Endothelial cell of umbilical vein (primary cell): ENCODE measurements at regions of chr10 and their contacts with region 1.

Region 1: GRCh38 chr10:79374312-79375191 is 27.3 kb downstream of the PPIF start:
- DNase-seq: peak; percentile 58
- H3K4me3 ChIP-seq: no peak overlapping the region
- H3K27ac ChIP-seq: no peak overlapping the region
- H3K4me1 ChIP-seq: no peaks in the 10 kb centered on the region
- H3K27me3 ChIP-seq: peaks cover 2 to 5% of the 10 kb centered on the region in 2 experiments
- CTCF ChIP-seq: peak; percentile 90
- POLR2A ChIP-seq: no peak

Region 2: DNA sequence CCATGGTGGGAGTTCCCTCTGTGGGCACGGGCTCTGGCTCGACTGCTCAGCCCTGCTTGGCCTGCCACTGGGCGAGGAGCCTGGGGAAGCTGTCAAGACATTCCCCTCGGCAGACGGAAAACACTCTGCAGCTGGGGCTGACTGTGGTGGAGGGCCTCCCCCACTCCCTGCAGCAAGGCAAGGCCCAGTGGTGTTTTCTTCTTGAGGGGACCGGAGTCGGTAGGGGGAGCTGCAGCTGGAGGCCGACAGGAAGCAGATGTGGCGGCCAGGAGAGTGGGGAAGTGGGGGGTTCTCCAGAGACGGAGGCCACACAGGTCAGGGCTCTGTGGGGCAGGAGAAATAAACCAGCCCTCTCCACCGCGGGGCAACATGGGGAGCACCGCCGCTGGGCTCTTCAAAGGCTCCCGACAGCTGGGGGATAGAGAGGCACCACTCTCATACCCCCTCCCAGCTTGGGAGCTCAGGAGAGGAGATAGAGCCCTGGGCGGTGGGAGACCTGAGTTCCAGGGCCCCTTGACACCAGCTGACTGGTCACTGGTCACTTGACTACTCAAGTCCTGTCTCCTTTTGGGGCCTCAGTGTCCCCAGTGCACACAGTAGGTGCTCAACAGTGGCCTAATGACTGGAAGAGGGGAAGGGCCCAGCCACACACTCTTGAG is 16.1 kb after region 1 on chr10:
- CTCF ChIA-PET with region 1: interaction called, 16 read pairs
- POLR2A ChIA-PET with region 1: no interaction called
- dilution Hi-C with region 1: no loop called
- intact Hi-C with region 1: no loop called
- DNase-seq: no peak
- H3K4me3 ChIP-seq: no peak overlapping the region
- H3K27ac ChIP-seq: no peak overlapping the region
- H3K4me1 ChIP-seq: no peaks in the 10 kb centered on the region
- H3K27me3 ChIP-seq: no peaks in the 10 kb centered on the region
- CTCF ChIP-seq: no peak
- POLR2A ChIP-seq: no peak

Region 3: DNA sequence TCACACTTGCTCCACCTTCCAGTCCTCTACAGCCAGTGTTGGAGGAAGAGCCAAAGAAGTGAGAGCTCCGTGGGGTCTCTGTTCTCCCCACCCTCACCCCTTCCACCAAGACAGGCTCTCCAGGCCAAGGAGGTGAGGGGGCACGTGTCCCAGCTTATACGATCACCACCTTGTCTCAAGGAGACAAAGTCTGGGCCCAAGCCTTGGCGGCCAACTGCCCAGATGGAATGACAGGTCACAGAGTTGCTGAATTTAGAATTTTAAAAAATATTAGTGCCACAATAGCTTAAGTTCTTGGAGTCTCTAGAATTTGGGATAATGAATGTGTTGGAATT is 39.4 kb after region 1 on chr10:
- CTCF ChIA-PET with region 1: interaction called, 10 read pairs
- POLR2A ChIA-PET with region 1: no interaction called
- dilution Hi-C with region 1: no loop called
- intact Hi-C with region 1: no loop called
- DNase-seq: no peak
- H3K4me3 ChIP-seq: no peak overlapping the region
- H3K27ac ChIP-seq: no peak overlapping the region
- H3K4me1 ChIP-seq: peaks cover 11% of the 10 kb centered on the region
- H3K27me3 ChIP-seq: no peaks in the 10 kb centered on the region
- CTCF ChIP-seq: no peak
- POLR2A ChIP-seq: no peak

Region 4: GRCh38 chr10:79445141-79445976 is 70.8 kb after region 1 on chr10 and contains the start of gene ZCCHC24:
- CTCF ChIA-PET with region 1: interaction called, 20 read pairs
- POLR2A ChIA-PET with region 1: no interaction called
- dilution Hi-C with region 1: no loop called
- intact Hi-C with region 1: no loop called
- DNase-seq: peak; percentile 98
- H3K4me3 ChIP-seq: peak within 1 kb of the TSS; percentile 45 to 65 (median 64)
- H3K27ac ChIP-seq: no peak within 1 kb of the TSS
- H3K4me1 ChIP-seq: peaks cover 19% of the 10 kb centered on the region
- H3K27me3 ChIP-seq: no peaks in the 10 kb centered on the region
- CTCF ChIP-seq: no peak
- POLR2A ChIP-seq: peak; percentile 62
- total RNA-seq, gene ZCCHC24: 5.7 and 8.4 TPM in 2 replicates

Region 5: GRCh38 chr10:79463578-79464496 is 89.3 kb after region 1 on chr10:
- CTCF ChIA-PET with region 1: interaction called, 139 read pairs
- POLR2A ChIA-PET with region 1: no interaction called
- dilution Hi-C with region 1: no loop called
- intact Hi-C with region 1: loop called (anchors 1 kb)
- DNase-seq: no peak
- H3K4me3 ChIP-seq: no peak overlapping the region
- H3K27ac ChIP-seq: no peak overlapping the region
- H3K4me1 ChIP-seq: no peaks in the 10 kb centered on the region
- H3K27me3 ChIP-seq: peaks cover 12 to 42% of the 10 kb centered on the region in 2 experiments
- CTCF ChIP-seq: no peak
- POLR2A ChIP-seq: no peak

Region 6: DNA sequence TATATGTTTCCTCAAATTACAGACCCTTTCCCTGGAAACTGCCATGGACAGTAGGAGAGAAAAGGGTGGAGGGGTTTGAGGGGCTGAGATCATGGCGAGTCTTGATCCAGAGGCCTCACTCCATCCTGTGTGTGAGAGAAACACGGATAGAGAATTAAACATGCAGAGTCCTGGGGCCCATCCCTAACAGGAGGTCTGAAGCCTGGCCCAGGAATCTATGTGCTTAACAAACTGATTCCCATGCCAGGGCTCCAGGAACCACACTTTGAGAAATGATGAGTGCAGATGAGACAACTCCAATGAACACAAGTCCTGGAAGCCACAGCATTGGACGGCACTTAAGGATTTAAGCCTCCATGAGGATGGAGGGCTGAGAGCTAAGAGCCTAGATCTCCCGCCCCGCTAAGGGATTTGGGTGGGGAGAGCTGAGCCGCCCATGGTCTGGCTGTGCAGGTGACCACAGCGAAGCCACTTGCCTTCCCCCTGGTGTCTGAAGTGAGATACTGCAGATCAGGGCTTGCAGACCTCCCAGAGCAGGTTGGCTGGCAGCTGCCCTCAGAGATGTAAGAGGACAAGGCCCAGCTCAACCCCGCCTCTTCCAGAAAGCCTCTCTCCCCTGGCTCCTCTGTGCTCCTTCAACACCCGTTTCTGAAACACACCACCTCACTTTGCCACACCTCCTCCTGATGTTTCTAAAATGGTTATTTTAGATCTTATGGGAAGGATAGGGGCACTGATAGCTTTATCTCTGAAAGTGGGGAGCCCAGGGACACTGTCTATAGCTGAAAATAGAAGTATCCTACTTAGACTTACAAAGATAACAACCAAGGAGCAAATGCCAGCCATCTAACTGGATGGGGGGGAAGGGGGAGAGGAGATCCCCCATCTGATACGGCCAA is 113.0 kb after region 1 on chr10:
- CTCF ChIA-PET with region 1: interaction called, 252 read pairs
- POLR2A ChIA-PET with region 1: no interaction called
- dilution Hi-C with region 1: no loop called
- intact Hi-C with region 1: loop called (anchors 1 kb)
- DNase-seq: peak; percentile 50
- H3K4me3 ChIP-seq: no peak overlapping the region
- H3K27ac ChIP-seq: no peak overlapping the region
- H3K4me1 ChIP-seq: no peaks in the 10 kb centered on the region
- H3K27me3 ChIP-seq: peaks cover 3 to 6% of the 10 kb centered on the region in 2 experiments
- CTCF ChIP-seq: peak; percentile 60 to 86
- POLR2A ChIP-seq: no peak

Region 7: GRCh38 chr10:79542626-79543025 is 168.1 kb after region 1 on chr10:
- CTCF ChIA-PET with region 1: interaction called, 19 read pairs
- POLR2A ChIA-PET with region 1: no interaction called
- dilution Hi-C with region 1: no loop called
- intact Hi-C with region 1: no loop called
- DNase-seq: no peak
- H3K4me3 ChIP-seq: no peak overlapping the region
- H3K27ac ChIP-seq: no peak overlapping the region
- H3K4me1 ChIP-seq: no peaks in the 10 kb centered on the region
- H3K27me3 ChIP-seq: no peaks in the 10 kb centered on the region
- CTCF ChIP-seq: no peak
- POLR2A ChIP-seq: no peak